ENCODE measurements at regions of chr5 and their contacts with region 1.

Region 1: DNA sequence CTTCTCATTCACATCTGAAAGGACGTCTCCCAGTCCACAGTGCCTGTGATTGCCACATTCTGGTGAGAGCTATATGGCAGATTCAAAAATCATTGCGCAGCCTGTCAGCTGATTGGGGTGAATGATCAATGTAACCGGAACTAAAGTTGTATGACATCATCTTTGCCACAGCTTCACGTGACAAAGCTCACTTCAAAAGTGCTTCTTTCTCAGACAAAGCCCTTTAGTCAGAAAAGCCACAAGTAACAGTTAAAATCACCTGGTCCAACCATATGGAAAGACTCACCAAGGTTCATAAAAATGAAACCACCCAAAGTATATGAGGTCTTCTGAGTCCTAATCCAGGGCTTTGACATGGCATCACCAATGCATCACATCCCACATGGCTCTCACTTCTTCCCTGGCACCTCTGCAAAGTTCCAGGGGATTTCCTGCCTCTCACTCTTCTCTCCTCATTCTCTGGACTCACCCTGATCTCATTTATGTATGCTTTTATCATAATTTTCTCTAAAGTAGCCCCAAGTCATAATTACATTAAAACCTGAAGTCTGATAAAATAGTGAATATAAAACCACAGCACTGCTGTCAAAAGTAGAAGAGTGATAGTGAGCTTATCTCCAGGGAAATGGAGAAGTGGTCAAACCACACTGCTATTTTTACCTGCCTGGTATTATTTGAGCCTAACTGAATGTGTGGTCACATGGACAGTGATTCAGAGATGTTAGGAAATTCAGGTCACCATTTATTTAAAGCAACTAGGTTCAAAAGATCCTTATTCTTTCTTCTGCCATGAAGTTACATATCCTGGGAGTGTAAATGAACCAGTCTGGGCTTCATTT is 193.1 kb upstream of the PTGER4 start:
- DNase-seq: peak; percentile 85
- H3K4me3 Mint-ChIP-seq: peak overlapping the region; percentile 1
- H3K27ac Mint-ChIP-seq: peak overlapping the region; percentile 92
- H3K4me1 Mint-ChIP-seq: peaks cover 83% of the 10 kb centered on the region
- H3K27me3 Mint-ChIP-seq: no peaks in the 10 kb centered on the region

Region 2: DNA sequence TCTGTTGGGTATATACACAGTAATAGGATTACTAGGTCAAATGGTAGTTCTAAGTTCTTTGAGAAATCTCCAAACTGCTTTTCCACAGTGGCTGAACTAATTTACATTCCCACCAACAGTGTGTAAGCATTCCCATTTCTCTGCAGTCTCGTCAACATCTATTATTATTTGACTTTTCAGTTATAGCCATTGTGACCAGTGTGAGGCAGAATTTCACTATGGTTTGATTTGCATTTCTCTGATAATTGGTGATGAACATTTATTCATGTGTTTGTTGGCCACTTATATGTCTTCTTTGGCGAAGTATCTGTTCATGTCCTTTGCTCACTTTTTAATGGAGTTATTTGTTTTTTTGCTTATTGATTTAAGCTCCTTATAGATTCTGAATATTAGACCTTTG is 465.6 kb before region 1 on chr5:
- CTCF ChIA-PET with region 1: no interaction called
- intact Hi-C with region 1: loop called (anchors 10 kb)
- DNase-seq: no peak
- H3K4me3 Mint-ChIP-seq: no peak overlapping the region
- H3K27ac Mint-ChIP-seq: no peak overlapping the region
- H3K4me1 Mint-ChIP-seq: no peaks in the 10 kb centered on the region
- H3K27me3 Mint-ChIP-seq: peaks cover 10% of the 10 kb centered on the region

Region 3: DNA sequence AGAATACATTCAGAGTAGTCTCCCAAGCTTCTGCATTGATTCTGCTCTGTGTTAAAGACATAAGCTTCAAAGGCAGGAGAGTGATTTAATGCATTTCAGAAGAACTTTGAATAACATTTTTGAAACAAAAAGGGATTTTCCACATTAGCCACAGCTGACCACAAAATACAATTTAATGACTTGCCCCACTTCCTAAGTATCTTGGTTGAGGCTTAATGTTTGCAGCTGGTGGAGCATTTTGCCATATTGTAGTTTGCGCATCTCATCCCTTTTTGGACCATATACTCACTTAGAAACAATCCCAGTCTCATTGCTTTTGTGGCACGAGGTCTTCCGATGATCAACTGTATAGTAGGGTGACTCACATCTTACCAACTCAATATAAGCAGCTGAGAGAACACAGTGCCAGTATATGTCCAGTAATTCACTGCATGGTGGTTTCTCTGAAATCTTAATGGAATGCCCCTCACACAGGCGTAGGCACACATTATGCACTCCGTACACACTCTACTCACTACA is 262.7 kb before region 1 on chr5:
- CTCF ChIA-PET with region 1: no interaction called
- intact Hi-C with region 1: loop called (anchors 1 kb)
- DNase-seq: peak; percentile 66
- H3K4me3 Mint-ChIP-seq: peak overlapping the region; percentile 31
- H3K27ac Mint-ChIP-seq: peak overlapping the region; percentile 92
- H3K4me1 Mint-ChIP-seq: peaks cover 50% of the 10 kb centered on the region
- H3K27me3 Mint-ChIP-seq: no peaks in the 10 kb centered on the region

Region 4: DNA sequence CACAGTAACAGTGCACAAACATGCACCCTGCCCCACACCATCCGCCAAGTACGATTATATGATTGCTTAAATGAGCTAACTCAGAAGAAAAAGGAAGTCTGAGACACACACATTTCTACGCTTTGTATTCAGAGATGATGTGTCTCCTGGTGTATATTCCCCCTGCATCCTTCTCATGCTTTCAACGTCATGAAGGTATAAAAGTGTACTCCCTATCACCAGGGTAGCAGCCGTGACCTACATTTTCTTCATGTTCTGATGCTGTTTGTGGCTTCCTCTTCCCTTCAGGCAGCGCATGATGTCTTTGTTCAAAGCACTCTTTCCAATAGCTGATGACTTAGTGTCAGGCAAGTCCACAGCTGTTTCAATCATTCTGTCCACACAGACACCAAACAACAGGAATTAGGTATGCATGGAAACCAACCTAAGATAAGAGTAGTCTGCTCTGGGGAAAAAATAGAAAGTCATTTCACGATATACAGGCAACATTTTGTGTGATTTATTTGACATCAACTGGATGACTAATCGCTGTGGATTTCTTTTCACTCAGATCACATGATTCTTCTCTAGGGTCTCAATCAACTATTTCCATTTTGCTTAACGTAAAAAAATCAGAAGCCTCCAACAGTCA is 76.3 kb before region 1 on chr5:
- CTCF ChIA-PET with region 1: interaction called, 5 read pairs
- intact Hi-C with region 1: loop called (anchors 1 kb)
- DNase-seq: peak; percentile 88
- H3K4me3 Mint-ChIP-seq: peak overlapping the region; percentile 58
- H3K27ac Mint-ChIP-seq: peak overlapping the region; percentile 98
- H3K4me1 Mint-ChIP-seq: peaks cover 64% of the 10 kb centered on the region
- H3K27me3 Mint-ChIP-seq: no peaks in the 10 kb centered on the region

Region 5: GRCh38 chr5:40688127-40688761 is 201.6 kb after region 1 on chr5:
- CTCF ChIA-PET with region 1: interaction called, 8 read pairs
- intact Hi-C with region 1: loop called (anchors 1 kb)
- DNase-seq: peak; percentile 95
- H3K4me3 Mint-ChIP-seq: peak overlapping the region; percentile 89
- H3K27ac Mint-ChIP-seq: peak overlapping the region; percentile 99
- H3K4me1 Mint-ChIP-seq: peaks cover 64% of the 10 kb centered on the region
- H3K27me3 Mint-ChIP-seq: no peaks in the 10 kb centered on the region

Measured in activated naive CD4-positive, alpha-beta T cell treated with anti-CD3 and anti-CD28 coated beads for 36 hours (primary cell).